ENCODE measurements at regions of chr19 and their contacts with region 1.

Region 1: GRCh38 chr19:57632987-57633831 is at the start of gene ZNF211:
- DNase-seq: peak; percentile 86 to 91 (median 88)
- H3K4me3 ChIP-seq: peak within 1 kb of the TSS; percentile 84 to 87
- H3K4me3 Mint-ChIP-seq: peak within 1 kb of the TSS; percentile 94 to 98 (median 96)
- H3K27ac ChIP-seq: peak within 1 kb of the TSS; percentile 81
- H3K27ac Mint-ChIP-seq: peak within 1 kb of the TSS; percentile 83 to 96 (median 94)
- H3K4me1 ChIP-seq: peaks cover 19% of the 10 kb centered on the region
- H3K4me1 Mint-ChIP-seq: peaks cover 18 to 35% (median 27%) of the 10 kb centered on the region in 4 donors
- H3K27me3 ChIP-seq: no peaks in the 10 kb centered on the region
- H3K27me3 Mint-ChIP-seq: no peaks in the 10 kb centered on the region
- total RNA-seq, gene ZNF211: 48.7 to 53.3 TPM

Region 2: DNA sequence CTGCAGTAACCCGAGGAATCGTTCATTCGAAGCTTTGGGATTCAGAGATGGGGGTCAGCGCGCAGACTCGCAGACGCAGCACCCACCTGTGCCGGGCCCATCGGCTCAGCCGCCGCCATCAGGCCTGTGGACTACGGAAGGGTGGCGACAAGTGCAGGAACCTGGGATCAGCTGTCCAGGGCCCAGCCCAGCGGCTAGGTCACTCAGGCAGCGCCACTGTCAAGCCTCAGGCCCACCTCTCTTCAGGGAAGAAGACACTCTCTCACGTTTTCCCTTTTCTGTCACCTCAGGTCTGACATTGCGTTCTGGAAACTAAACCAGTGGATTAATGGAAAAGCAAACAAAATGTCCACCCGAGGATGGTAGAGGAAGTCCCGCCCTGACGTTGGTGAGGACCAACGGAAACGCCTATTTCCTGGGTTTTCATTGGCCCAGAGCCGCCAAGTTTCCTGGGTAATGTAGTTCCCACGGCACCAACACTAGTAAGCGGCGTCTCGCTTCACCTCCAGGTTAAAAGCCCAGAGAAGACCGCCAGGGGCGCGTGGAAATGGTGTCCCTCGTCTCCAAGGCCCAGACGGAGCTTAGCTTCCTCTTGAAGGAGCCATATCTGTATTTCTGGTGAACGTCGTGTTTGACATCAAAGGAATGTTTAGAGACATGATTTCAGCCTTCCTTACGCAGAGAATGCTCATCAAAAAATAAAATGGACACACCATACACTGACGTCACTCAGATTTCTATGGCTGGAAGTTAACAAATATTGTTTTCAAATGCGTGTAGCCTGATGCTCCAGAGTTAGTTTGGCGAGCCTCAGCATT is 155.8 kb before region 1 on chr19 and contains the start of gene ZNF772:
- CTCF ChIA-PET with region 1: no interaction called
- POLR2A ChIA-PET with region 1: no interaction called
- intact Hi-C with region 1: loop called (anchors 1 kb)
- DNase-seq: peak; percentile 86 to 96 (median 89)
- H3K4me3 ChIP-seq: peak within 1 kb of the TSS; percentile 36 to 89
- H3K4me3 Mint-ChIP-seq: peak within 1 kb of the TSS; percentile 86 to 98 (median 92)
- H3K27ac ChIP-seq: peak within 1 kb of the TSS; percentile 61
- H3K27ac Mint-ChIP-seq: peak within 1 kb of the TSS; percentile 26 to 95 (median 90)
- H3K4me1 ChIP-seq: peaks cover 8% of the 10 kb centered on the region
- H3K4me1 Mint-ChIP-seq: peaks cover 4 to 19% (median 14%) of the 10 kb centered on the region in 4 donors
- H3K27me3 ChIP-seq: no peaks in the 10 kb centered on the region
- H3K27me3 Mint-ChIP-seq: peaks cover 0 to 2% of the 10 kb centered on the region in 2 donors
- total RNA-seq, gene ZNF772: 12.8 to 17.4 TPM

Region 3: DNA sequence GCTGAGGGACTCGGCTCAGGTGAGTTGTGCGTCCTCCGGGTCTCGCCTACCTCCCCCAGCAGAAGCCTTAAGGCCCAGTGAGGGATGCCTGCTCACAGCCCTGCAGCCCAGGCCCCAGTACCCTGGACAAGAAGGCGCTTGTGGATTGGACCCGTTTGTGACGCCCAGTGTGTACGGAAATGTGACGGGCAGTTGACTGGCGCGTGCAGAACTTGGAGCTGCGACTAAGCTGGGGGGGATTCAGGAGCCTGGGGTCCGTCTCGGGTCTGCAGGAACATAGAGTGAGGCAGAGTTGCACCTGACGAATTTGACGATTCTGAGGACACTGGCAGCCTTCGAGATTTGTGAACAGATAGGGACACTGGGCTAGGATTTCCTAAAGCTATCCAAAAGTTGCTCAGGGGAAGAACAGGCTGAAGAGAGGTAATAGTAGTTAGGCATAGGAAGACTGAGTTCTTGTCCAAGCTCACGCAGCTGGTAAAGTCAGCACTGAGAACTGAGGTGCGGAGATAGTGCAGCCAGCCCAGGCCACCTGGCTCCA is 49.1 kb after region 1 on chr19:
- CTCF ChIA-PET with region 1: no interaction called
- POLR2A ChIA-PET with region 1: interaction called, 4 read pairs
- intact Hi-C with region 1: loop called (anchors 1 kb)
- DNase-seq: no peak
- H3K4me3 ChIP-seq: peak overlapping the region; percentile 87 to 92
- H3K4me3 Mint-ChIP-seq: peak overlapping the region; percentile 96 to 99 (median 97)
- H3K27ac ChIP-seq: peak overlapping the region; percentile 54
- H3K27ac Mint-ChIP-seq: peak overlapping the region; percentile 91 to 99 (median 97)
- H3K4me1 ChIP-seq: peaks cover 18% of the 10 kb centered on the region
- H3K4me1 Mint-ChIP-seq: peaks cover 21 to 45% (median 38%) of the 10 kb centered on the region in 4 donors
- H3K27me3 ChIP-seq: no peaks in the 10 kb centered on the region
- H3K27me3 Mint-ChIP-seq: no peaks in the 10 kb centered on the region

Region 4: DNA sequence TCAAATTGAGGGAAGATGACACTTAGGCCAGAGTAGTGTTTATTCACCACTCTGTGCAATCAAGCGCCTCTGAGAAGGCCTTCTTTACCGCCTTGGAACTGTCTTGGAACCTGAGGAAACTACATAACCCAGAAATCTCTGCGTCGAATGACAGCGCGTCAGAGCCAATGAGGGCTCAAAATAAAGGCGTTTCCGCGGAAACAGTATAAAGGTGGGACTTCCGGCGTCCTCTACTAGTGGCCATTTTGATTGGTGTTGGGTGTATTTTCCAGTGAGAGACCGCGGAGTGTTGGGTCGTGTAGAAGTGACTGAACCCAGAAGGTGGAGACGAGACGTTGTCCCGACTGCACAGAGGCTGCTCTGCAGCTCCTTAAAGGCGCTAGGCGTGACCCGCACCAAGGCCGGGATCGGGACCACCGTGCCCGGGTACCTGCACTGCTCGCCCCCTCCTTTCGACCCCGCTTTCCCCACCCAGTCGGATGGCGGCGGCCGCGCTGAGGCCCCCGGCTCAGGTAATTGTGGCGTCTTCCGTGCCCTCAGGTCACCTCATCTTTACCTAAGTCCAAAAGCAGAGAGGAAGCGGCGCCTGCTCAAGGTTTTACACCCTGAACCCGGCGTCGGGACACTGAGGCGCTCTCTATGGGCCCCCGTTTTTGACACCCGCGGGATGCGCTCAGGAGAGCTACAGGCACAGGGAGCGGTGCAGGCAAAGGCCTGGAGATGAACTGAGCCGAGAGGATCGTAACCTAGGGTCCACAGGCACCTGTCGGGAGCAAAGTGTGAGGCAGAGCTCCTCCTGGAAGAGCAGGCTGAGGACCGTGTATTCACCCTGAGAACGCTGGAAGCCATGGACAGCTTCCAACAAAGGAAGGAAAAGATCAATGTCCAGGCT is 113.6 kb after region 1 on chr19 and contains the start of gene ZNF776:
- CTCF ChIA-PET with region 1: no interaction called
- POLR2A ChIA-PET with region 1: interaction called, 9 read pairs
- intact Hi-C with region 1: loop called (anchors 2 kb)
- DNase-seq: peak; percentile 84 to 90 (median 87)
- H3K4me3 ChIP-seq: peak within 1 kb of the TSS; percentile 78 to 87
- H3K4me3 Mint-ChIP-seq: peak within 1 kb of the TSS; percentile 87 to 99 (median 94)
- H3K27ac ChIP-seq: peak within 1 kb of the TSS; percentile 77
- H3K27ac Mint-ChIP-seq: peak within 1 kb of the TSS; percentile 76 to 98 (median 94)
- H3K4me1 ChIP-seq: peaks cover 18% of the 10 kb centered on the region
- H3K4me1 Mint-ChIP-seq: peaks cover 13 to 37% (median 27%) of the 10 kb centered on the region in 4 donors
- H3K27me3 ChIP-seq: no peaks in the 10 kb centered on the region
- H3K27me3 Mint-ChIP-seq: no peaks in the 10 kb centered on the region
- total RNA-seq, gene ZNF776: 38.9 to 40.9 TPM

Region 5: DNA sequence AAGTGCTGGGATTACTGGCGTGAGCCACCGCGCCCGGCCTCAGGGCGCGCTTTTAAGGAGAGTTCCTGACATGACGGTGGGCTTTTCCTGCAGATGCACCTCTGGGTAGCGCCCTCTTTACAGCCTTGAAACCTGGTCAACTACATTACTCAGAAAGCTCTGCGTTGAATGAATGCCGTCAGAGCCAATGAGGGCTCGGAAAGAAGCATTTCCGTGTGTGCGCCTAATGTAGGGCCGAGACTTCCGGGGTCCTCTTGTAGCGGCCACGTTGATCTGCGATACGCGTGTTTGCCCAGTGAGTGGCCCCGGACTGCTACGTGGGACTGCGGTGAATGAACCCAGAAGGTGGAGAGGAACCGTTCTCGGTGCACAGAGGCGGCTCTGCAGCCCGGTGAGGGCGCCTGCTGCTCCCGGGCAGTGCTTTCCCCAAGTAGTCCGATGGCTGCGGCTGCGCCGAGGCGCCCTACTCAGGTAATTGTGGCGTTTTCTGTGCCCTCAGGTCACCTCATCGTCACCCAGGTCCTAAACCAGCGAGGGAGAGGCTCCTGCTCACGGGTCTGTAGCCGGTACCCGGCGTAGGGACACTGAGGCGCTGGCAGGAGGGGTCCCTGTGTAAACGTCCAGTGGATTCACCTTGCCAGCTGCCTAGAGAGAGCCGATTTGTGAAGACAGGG is 186.4 kb after region 1 on chr19:
- CTCF ChIA-PET with region 1: no interaction called
- POLR2A ChIA-PET with region 1: interaction called, 6 read pairs
- intact Hi-C with region 1: loop called (anchors 1 kb)
- DNase-seq: peak; percentile 80 to 91 (median 84)
- H3K4me3 ChIP-seq: peak overlapping the region; percentile 86 to 91
- H3K4me3 Mint-ChIP-seq: peak overlapping the region; percentile 96 to 99 (median 98)
- H3K27ac ChIP-seq: peak overlapping the region; percentile 75
- H3K27ac Mint-ChIP-seq: peak overlapping the region; percentile 93 to 99 (median 99)
- H3K4me1 ChIP-seq: peaks cover 25% of the 10 kb centered on the region
- H3K4me1 Mint-ChIP-seq: peaks cover 45 to 75% (median 55%) of the 10 kb centered on the region in 4 donors
- H3K27me3 ChIP-seq: no peaks in the 10 kb centered on the region
- H3K27me3 Mint-ChIP-seq: no peaks in the 10 kb centered on the region